Pancreas (tissue), 10 donors: ENCODE measurements at regions of chr5 and their contacts with region 1.

Region 1: DNA sequence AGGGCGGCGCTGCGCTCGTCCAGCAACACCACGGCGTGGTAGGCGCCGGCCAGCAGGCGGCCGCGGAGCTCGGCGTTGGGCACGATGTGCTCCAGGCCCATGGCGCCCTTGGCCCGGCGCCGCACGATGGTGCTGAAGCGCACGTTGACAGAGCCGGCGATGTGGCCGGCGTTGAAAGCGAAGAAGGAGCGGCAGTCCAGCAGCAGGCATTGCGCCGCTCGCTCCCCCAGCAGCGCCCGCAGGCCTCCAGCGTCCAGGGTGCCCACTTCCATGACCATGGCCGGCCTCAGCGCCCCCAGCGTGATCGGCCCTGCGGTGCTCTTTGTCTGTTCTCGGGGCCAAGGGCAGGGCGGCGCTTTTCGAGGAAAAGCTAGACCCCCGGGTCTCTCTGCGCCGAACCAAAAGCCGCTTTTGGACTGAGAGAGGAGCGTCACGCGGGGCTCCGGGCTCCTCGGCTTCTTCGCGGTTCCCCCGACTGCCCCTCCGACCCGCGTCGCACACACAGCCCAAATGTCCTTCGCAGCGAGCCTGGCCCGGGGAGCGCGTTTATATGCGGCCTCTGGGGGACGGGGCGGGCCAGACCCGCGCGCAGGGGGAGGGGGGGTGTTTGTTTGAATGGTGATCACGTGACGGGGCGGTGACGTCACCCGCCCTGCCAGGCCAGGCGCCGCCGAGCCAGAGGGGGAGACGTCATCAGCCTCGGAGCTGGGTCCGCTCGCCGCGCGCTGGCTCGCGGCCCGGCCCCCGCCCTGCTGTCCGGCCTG is at the start of gene DUSP1:
- DNase-seq: peak; percentile 99 to 100 (median 100)
- ATAC-seq: peak; percentile 62 to 74 (median 70)
- H3K4me3 ChIP-seq: peak within 1 kb of the TSS; percentile 64 to 100 (median 77)
- H3K27ac ChIP-seq: peak within 1 kb of the TSS; percentile 98 to 100 (median 100)
- H3K4me1 ChIP-seq: peaks cover 0 to 38% (median 17%) of the 10 kb centered on the region in 3 donors
- H3K27me3 ChIP-seq: no peaks in the 10 kb centered on the region
- CTCF ChIP-seq: peak in 3 of 4 donors; percentile 17 to 51 (median 30)
- total RNA-seq, gene DUSP1: 18.6 to 198 (median 55.5) TPM

Region 2: DNA sequence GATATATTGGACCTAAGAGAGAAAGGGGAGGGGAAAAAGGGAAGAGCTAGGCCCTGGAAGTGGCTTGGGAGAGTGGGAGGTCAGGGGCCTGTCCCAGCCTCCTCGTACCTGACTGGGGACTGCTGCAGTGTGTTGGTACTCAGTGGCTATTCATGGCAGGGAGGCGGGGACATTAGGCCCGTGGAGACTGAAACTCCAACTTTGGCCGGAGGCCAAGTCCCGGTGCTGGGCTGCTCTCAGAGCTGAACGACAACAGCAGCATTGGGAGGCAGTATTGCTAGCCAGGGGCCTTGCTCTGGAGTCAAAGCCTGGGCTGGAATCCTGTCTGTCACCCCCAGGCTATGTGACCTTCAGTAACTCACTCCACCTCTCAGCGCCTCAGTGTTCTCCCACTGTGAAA is 92.0 kb before region 1 on chr5:
- intact Hi-C with region 1: no loop called
- DNase-seq: peak in 4 of 6 donors; percentile 68 to 86 (median 71)
- ATAC-seq: peak; percentile 55 to 79 (median 67)
- H3K4me3 ChIP-seq: no peak overlapping the region
- H3K27ac ChIP-seq: no peak overlapping the region
- H3K4me1 ChIP-seq: no peaks in the 10 kb centered on the region
- H3K27me3 ChIP-seq: no peaks in the 10 kb centered on the region
- CTCF ChIP-seq: no peak

Region 3: DNA sequence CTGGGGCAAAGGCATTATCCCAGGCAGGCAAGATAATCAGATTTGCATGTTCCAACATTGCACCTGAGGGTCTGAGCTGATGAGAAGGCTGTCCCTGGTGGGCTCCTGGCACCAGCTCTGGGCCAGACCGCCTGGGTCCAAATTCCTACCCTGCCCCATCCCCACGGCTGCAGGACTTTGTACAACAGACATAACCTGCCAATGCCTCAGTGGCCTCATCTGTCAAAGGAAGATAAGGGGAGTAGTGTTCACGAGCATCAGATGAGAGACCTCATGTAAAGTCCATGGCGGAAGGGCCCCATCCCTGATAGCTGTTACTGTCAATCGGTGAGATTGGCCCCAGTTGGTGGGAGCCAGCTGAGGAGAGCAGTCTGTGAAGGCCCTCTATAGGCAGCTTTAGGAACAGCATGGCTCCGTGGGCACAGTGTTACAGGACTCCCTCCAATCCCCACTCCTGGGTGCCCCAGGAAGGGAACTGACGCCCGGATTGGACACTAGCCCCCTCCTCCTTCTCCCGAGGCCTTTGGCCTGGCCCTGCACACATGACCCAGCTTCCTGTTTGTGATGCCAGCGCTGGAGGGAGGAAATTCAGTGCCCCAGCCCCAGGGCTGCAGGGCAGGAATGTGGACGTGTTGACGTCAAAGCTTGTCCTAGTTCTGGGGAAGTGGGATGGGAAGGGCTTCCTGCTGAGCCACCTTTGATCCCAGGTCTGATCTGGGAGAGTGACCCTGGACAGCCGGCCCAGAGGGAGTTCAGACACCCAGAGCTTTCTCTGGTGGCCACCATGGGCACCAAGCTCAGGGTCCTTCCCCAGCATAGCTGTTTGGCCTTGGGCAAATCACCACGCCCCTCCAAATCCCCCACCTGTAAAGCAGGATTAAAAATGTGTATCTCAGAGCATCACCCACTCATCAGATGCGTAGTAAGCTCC is 56.1 kb before region 1 on chr5:
- intact Hi-C with region 1: loop called in 1 of 3 experiments (anchors 5 kb)
- DNase-seq: peak; percentile 63 to 83 (median 78)
- ATAC-seq: peak; percentile 62 to 81 (median 80)
- H3K4me3 ChIP-seq: no peak overlapping the region
- H3K27ac ChIP-seq: peak overlapping the region; percentile 3 to 41 (median 26)
- H3K4me1 ChIP-seq: no peaks in the 10 kb centered on the region
- H3K27me3 ChIP-seq: no peaks in the 10 kb centered on the region
- CTCF ChIP-seq: peak; percentile 70 to 84 (median 75)

Region 4: GRCh38 chr5:172849606-172850453 is 79.0 kb after region 1 on chr5:
- intact Hi-C with region 1: loop called in 1 of 3 experiments (anchors 10 kb)
- DNase-seq: no peak
- ATAC-seq: peak in 3 of 4 donors; percentile 42 to 53 (median 53)
- H3K4me3 ChIP-seq: no peak overlapping the region
- H3K27ac ChIP-seq: peak overlapping the region in 2 of 4 donors; percentile 2 to 3
- H3K4me1 ChIP-seq: peaks cover 2 to 11% (median 6%) of the 10 kb centered on the region in 3 donors
- H3K27me3 ChIP-seq: no peaks in the 10 kb centered on the region
- CTCF ChIP-seq: no peak

Region 5: DNA sequence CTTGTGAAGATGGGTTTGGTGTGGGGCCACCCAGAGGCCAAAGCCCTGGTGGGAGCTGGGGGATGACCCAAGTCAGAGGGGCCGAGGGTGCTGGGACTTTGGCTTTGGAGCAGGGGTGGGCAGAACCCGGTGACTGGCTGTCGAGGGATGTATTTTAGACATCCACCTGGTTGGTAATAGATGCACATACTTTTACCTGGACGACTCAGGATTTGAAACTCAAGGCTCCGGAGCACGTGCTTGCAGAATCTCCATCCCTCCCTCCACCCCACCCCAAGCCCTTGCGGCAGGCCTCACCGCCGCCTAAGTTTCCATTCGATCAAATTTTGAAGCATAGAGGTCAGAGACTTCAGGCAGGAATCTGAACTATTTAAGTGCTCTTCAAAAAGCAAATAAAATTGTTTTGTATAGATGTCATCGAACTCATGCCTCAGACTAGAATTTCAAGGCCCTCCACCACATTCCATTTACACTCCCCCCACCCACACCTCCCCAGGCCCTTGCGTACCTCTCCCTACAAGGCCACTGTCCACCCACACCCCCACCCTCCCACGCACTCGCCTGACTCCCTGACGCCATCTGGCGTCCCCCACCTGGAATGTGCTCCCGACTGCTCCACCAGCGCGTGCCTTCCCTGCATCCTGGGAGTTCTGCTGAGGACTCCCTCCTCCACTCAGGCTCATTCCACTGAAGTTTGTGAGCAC is 131.8 kb after region 1 on chr5:
- intact Hi-C with region 1: loop called in 1 of 3 experiments (anchors 10 kb)
- DNase-seq: peak; percentile 77 to 90 (median 84)
- ATAC-seq: peak; percentile 6 to 35 (median 29)
- H3K4me3 ChIP-seq: no peak overlapping the region
- H3K27ac ChIP-seq: peak overlapping the region; percentile 99 to 100 (median 99)
- H3K4me1 ChIP-seq: peaks cover 29 to 52% (median 45%) of the 10 kb centered on the region in 3 donors
- H3K27me3 ChIP-seq: no peaks in the 10 kb centered on the region
- CTCF ChIP-seq: no peak